Dendritic cell treated with granulocyte-macrophage colony-stimulating factor and Interleukin-4, amounts not matched to agents 40 ng/mL and 50 ng/mL, for 4 days (primary cell): ENCODE measurements at regions of chr11 and their contacts with region 1.

Region 1: GRCh38 chr11:9384535-9385303 is at the start of gene IPO7:
- H3K4me3 Mint-ChIP-seq: peak within 1 kb of the TSS; percentile 87
- H3K27ac Mint-ChIP-seq: peak within 1 kb of the TSS; percentile 98
- H3K4me1 Mint-ChIP-seq: peaks cover 26% of the 10 kb centered on the region
- H3K27me3 Mint-ChIP-seq: no peaks in the 10 kb centered on the region

Region 2: DNA sequence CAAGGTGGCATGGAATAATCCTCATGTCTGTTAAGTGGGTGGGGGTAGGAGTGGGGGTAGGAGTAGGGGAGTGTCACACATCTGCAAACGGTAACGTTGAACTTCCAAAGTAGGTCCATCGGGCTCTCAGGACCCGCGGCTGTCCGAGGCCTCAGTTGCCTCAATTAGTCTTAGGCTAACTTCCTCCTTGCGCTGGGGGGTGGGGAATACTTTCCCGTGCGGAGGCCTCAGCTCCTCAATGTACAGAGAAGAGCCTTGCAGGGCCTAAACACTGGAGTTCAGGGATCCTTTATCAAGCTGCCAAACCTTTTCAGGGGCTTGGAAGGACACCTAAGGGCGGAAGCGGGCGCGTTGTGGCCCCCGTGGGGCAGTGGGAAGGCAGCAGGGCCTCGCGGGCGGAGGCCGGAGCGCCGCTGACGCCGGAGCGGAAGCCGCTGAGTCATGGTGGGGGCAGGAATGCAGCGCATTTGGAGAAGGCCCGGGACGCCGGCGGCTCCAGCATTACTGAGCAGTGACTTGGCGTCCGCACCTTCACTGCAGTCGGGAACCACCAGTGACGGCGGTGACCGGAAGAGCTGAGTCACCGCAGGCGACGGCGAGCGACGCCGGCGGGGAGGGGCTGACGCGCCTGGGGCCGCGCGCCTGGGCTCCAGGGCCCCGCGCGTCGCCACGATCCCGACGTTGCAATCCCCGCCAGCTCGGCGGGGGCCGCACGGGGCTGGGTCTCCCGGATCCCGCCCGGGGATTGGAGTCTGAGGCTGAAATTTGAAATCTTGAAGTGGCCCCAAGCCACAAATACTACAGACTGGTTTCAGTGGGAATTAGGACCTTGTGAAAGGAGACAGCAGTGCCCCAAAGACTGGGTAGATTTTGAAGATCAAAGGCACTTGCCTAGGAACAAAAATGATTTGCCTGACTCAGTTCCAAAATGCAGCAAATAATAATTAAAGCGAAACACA is 20.5 kb before region 1 on chr11:
- intact Hi-C with region 1: loop called (anchors 1 kb)
- H3K4me3 Mint-ChIP-seq: peak overlapping the region; percentile 78
- H3K27ac Mint-ChIP-seq: peak overlapping the region; percentile 99
- H3K4me1 Mint-ChIP-seq: peaks cover 26% of the 10 kb centered on the region
- H3K27me3 Mint-ChIP-seq: no peaks in the 10 kb centered on the region